Mammary epithelial cell (primary cell): ENCODE measurements at regions of chr18 and their contacts with region 1.

Region 1: GRCh38 chr18:23871410-23871809 is 143.1 kb upstream of the TTC39C start:
- DNase-seq: peak; percentile 99
- H3K4me3 ChIP-seq: peak overlapping the region in 1 of 3 experiments; percentile 8
- H3K27ac ChIP-seq: peak overlapping the region; percentile 95
- H3K4me1 ChIP-seq: peaks cover 32% of the 10 kb centered on the region
- H3K27me3 ChIP-seq: no peaks in the 10 kb centered on the region
- CTCF ChIP-seq: no peak

Region 2: GRCh38 chr18:23619388-23619881 is 252.0 kb before region 1 on chr18:
- CTCF ChIA-PET with region 1: no interaction called
- dilution Hi-C with region 1: no loop called
- in situ Hi-C with region 1: no loop called
- intact Hi-C with region 1: loop called (anchors 5 kb)
- DNase-seq: no peak
- H3K4me3 ChIP-seq: peak overlapping the region in 2 of 3 experiments; percentile 33 to 34
- H3K27ac ChIP-seq: no peak overlapping the region
- H3K4me1 ChIP-seq: peaks cover 8% of the 10 kb centered on the region
- H3K27me3 ChIP-seq: peaks cover 5% of the 10 kb centered on the region
- CTCF ChIP-seq: no peak

Region 3: GRCh38 chr18:23828426-23828825 is 43.0 kb before region 1 on chr18:
- CTCF ChIA-PET with region 1: no interaction called
- dilution Hi-C with region 1: no loop called
- in situ Hi-C with region 1: no loop called
- intact Hi-C with region 1: loop called (anchors 1 kb)
- DNase-seq: peak; percentile 93
- H3K4me3 ChIP-seq: peak overlapping the region in 1 of 3 experiments; percentile 36
- H3K27ac ChIP-seq: peak overlapping the region; percentile 100
- H3K4me1 ChIP-seq: peaks cover 55% of the 10 kb centered on the region
- H3K27me3 ChIP-seq: no peaks in the 10 kb centered on the region
- CTCF ChIP-seq: no peak

Region 4: GRCh38 chr18:23837591-23837990 is 33.8 kb before region 1 on chr18:
- CTCF ChIA-PET with region 1: no interaction called
- dilution Hi-C with region 1: no loop called
- in situ Hi-C with region 1: loop called (anchors 5 kb)
- intact Hi-C with region 1: loop called (anchors 1 kb)
- DNase-seq: peak; percentile 86
- H3K4me3 ChIP-seq: no peak overlapping the region
- H3K27ac ChIP-seq: peak overlapping the region; percentile 99
- H3K4me1 ChIP-seq: peaks cover 62% of the 10 kb centered on the region
- H3K27me3 ChIP-seq: no peaks in the 10 kb centered on the region
- CTCF ChIP-seq: no peak

Region 5: DNA sequence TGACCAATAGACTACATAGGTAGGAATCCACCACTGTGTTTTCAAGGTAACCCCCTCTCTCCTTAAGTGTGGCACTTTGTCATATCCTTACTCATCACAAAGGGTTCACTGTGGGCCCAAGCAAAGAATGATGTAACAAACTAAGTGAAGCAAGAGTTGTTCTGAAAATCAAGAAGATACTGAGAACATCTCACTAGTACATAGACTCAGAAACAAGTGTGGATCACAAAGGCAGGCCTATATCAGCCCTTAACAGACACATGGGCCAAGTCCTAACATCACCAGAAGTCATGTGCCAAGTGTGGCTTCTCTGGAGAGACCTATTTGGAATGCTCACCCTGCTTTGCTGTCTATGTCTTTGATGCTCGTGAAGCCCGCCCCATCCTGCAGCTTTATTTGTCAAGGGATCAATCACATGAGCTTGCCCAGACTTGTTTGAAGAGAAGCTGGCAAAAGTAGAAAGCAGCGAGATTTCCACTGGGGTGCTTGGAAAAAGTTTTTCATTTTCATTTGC is 11.9 kb after region 1 on chr18:
- CTCF ChIA-PET with region 1: no interaction called
- dilution Hi-C with region 1: no loop called
- in situ Hi-C with region 1: no loop called
- intact Hi-C with region 1: loop called (anchors 1 kb)
- DNase-seq: peak; percentile 85
- H3K4me3 ChIP-seq: no peak overlapping the region
- H3K27ac ChIP-seq: peak overlapping the region; percentile 73
- H3K4me1 ChIP-seq: peaks cover 77% of the 10 kb centered on the region
- H3K27me3 ChIP-seq: no peaks in the 10 kb centered on the region
- CTCF ChIP-seq: no peak

Region 6: GRCh38 chr18:23918401-23919032 is 47.1 kb after region 1 on chr18:
- CTCF ChIA-PET with region 1: no interaction called
- dilution Hi-C with region 1: no loop called
- in situ Hi-C with region 1: no loop called
- intact Hi-C with region 1: loop called (anchors 1 kb)
- DNase-seq: no peak
- H3K4me3 ChIP-seq: no peak overlapping the region
- H3K27ac ChIP-seq: no peak overlapping the region
- H3K4me1 ChIP-seq: no peaks in the 10 kb centered on the region
- H3K27me3 ChIP-seq: no peaks in the 10 kb centered on the region
- CTCF ChIP-seq: peak; percentile 80 to 83

Region 7: GRCh38 chr18:25164848-25165811 is 1293.7 kb after region 1 on chr18:
- CTCF ChIA-PET with region 1: no interaction called
- dilution Hi-C with region 1: no loop called
- in situ Hi-C with region 1: no loop called
- intact Hi-C with region 1: no loop called
- DNase-seq: peak; percentile 6
- H3K4me3 ChIP-seq: no peak overlapping the region
- H3K27ac ChIP-seq: no peak overlapping the region
- H3K4me1 ChIP-seq: no peaks in the 10 kb centered on the region
- H3K27me3 ChIP-seq: peaks cover 2% of the 10 kb centered on the region
- CTCF ChIP-seq: no peak